Pancreas (tissue), 10 donors: ENCODE measurements at regions of chr4 and their contacts with region 1.

Region 1: DNA sequence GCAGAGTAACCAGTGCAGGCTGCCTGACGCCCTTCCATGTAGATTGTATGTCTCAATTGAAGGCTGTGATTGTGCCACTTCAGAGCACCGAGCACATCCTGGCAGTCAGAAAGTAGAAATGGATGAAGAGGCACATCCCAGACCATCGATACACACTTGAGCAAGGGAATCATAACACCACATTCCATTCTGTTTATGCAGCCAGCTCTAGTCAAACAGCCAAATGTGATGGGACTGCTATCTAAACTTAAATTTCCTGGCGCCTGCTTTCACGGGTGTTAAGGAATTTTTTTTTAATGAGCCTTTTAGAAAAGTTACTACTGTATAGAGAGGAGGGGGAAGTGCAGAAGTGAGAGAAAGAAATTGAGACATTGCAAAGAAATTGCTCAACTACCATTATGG is 84.4 kb downstream of the PPARGC1A start:
- DNase-seq: no peak
- ATAC-seq: no peak
- H3K4me3 ChIP-seq: no peak overlapping the region
- H3K27ac ChIP-seq: no peak overlapping the region
- H3K4me1 ChIP-seq: no peaks in the 10 kb centered on the region
- H3K27me3 ChIP-seq: no peaks in the 10 kb centered on the region
- CTCF ChIP-seq: no peak

Region 2: DNA sequence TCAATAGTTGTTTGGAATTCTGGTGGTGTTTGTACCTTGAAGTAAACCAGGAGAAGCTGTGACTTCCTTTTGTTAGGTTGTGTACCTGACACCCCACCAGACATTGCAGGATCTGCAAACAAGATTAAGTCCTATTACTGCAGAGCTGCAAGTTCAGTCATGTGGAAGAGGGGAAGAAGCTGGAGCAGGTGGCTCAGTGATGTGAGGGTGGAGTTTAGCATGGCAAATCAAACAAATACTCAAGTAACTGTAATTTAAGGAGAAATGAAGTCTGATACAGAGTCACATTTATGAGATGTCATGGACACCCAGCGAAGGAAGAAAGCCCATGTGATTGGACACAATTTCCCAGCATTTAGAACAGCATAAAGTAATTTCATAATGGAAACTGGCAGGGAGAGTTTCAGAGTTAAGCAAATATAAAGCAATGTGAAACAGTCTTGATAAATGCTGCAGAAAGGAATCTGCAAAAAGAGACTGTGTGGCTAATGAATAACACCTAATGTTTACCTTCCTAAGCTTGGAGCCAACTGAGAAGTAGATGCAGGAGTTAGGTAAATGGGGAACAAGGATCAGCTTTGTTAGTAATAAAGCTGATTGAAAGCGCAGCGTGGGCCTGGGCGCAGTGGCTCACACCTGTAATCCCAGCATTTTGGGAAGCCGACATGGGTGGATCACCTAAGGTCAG is 863.6 kb before region 1 on chr4:
- intact Hi-C with region 1: loop called in 1 of 3 experiments (anchors 10 kb)
- DNase-seq: peak; percentile 26 to 60 (median 52)
- ATAC-seq: peak; percentile 88 to 97 (median 96)
- H3K4me3 ChIP-seq: no peak overlapping the region
- H3K27ac ChIP-seq: peak overlapping the region in 3 of 4 donors; percentile 39 to 77 (median 68)
- H3K4me1 ChIP-seq: peaks cover 5 to 12% (median 10%) of the 10 kb centered on the region in 3 donors
- H3K27me3 ChIP-seq: no peaks in the 10 kb centered on the region
- CTCF ChIP-seq: no peak